Psoas muscle (tissue), 8 donors: ENCODE measurements at regions of chr10 and their contacts with region 1.

Region 1: DNA sequence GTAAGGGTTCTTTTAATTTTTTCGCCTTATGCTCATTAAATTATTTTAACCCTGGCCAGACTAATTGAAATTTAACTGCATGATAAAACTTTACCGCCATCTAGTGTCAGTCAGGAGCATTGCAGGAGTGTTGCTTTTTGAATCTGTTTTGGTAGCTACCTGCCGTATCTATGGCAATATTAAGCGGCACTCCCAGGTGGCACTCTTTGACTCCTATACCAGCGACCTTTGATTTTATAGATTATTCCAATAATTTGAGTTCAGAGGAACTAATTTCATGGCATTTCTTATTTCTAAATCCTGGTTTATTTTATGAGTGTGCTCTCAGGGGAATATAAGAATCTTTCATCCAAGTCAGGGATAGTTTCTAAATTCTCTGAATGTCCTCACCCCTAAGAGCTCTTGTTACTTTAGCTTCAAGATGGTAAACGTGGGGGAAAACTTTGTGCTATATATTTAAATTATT is 198.9 kb downstream of the REEP3 start:
- DNase-seq: no peak
- ATAC-seq: peak in 3 of 4 donors; percentile 49 to 78 (median 62)
- H3K4me3 ChIP-seq: no peak overlapping the region
- H3K27ac ChIP-seq: no peak overlapping the region
- H3K4me1 ChIP-seq: peaks cover 3% of the 10 kb centered on the region
- H3K27me3 ChIP-seq: no peaks in the 10 kb centered on the region
- CTCF ChIP-seq: peak; percentile 99

Region 2: GRCh38 chr10:63003816-63004453 is 716.2 kb before region 1 on chr10:
- intact Hi-C with region 1: loop called in 1 of 2 experiments (anchors 10 kb)
- DNase-seq: no peak
- ATAC-seq: no peak
- H3K4me3 ChIP-seq: no peak overlapping the region
- H3K27ac ChIP-seq: no peak overlapping the region
- H3K4me1 ChIP-seq: no peaks in the 10 kb centered on the region
- H3K27me3 ChIP-seq: no peaks in the 10 kb centered on the region
- CTCF ChIP-seq: peak; percentile 24

Region 3: DNA sequence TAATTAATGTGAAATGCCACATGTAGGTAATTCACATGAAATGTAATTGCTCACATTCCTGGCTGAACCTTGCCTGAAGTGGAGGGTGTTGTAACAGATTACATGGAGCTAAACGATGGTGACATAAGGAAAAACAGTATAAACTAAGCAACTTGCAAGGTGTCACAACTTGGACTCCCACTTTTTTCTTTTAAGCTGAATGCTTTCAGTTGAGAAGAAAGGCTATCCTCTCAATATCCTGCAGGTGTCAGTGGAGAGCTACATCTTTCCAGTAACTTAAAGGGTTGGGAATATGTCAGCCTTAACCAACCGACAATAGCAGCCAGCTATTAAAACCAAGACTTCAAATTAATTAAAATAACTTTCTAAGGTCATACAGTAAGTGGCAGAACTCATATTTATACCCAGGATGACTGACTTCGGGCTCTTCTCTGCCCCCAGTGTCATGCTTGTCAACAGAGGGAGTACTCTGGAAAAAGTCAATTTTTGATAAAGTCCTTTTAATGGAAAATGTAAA is 553.3 kb before region 1 on chr10:
- intact Hi-C with region 1: loop called (anchors 2 to 5 kb)
- DNase-seq: no peak
- ATAC-seq: peak; percentile 65 to 84 (median 76)
- H3K4me3 ChIP-seq: no peak overlapping the region
- H3K27ac ChIP-seq: no peak overlapping the region
- H3K4me1 ChIP-seq: peaks cover 12% of the 10 kb centered on the region
- H3K27me3 ChIP-seq: no peaks in the 10 kb centered on the region
- CTCF ChIP-seq: peak; percentile 79

Region 4: GRCh38 chr10:63521416-63522276 is 198.5 kb before region 1 on chr10:
- intact Hi-C with region 1: loop called (anchors 5 to 10 kb)
- DNase-seq: peak; percentile 76 to 86
- ATAC-seq: peak; percentile 84 to 87 (median 86)
- H3K4me3 ChIP-seq: peak overlapping the region; percentile 83
- H3K27ac ChIP-seq: peak overlapping the region; percentile 98
- H3K4me1 ChIP-seq: peaks cover 53% of the 10 kb centered on the region
- H3K27me3 ChIP-seq: no peaks in the 10 kb centered on the region
- CTCF ChIP-seq: no peak

Region 5: DNA sequence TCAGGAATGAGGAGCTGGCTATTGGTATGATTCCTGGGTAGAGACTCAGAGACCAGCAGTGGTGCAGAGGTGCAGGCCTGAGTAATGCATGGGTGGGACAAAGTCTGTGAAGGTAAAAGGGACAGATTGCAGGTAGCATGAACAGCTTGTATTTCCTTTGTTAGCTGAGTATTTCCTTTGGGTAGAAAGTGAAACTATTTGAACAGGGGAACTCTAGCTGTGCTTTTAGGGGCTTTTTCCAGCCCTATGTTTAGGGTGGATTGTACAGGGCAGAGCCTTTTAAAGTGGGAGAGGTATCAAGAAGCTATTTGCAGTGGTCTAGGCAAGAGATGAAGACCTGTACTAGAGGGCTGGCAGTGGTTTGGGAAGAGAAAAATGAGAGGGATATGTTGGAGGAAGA is 541.0 kb after region 1 on chr10:
- intact Hi-C with region 1: no loop called
- DNase-seq: no peak
- ATAC-seq: no peak
- H3K4me3 ChIP-seq: no peak overlapping the region
- H3K27ac ChIP-seq: no peak overlapping the region
- H3K4me1 ChIP-seq: no peaks in the 10 kb centered on the region
- H3K27me3 ChIP-seq: no peaks in the 10 kb centered on the region
- CTCF ChIP-seq: no peak